Thyroid gland (tissue), 4 donors: ENCODE measurements at regions of chr11 and their contacts with region 1.

Region 1: GRCh38 chr11:130531061-130531460 is 82.6 kb downstream of the ADAMTS15 start:
- DNase-seq: peak; percentile 93
- H3K4me3 ChIP-seq: no peak overlapping the region
- H3K27ac ChIP-seq: peak overlapping the region; percentile 92 to 96 (median 96)
- H3K4me1 ChIP-seq: peaks cover 61 to 80% of the 10 kb centered on the region in 2 donors
- H3K27me3 ChIP-seq: no peaks in the 10 kb centered on the region
- CTCF ChIP-seq: peak in 4 of 6 experiments; percentile 26 to 53 (median 34)
- POLR2A ChIP-seq: no peak

Region 2: GRCh38 chr11:130449996-130450769 is 80.9 kb before region 1 on chr11:
- intact Hi-C with region 1: loop called (anchors 10 kb)
- DNase-seq: peak; percentile 89 to 94
- H3K4me3 ChIP-seq: peak overlapping the region; percentile 50 to 90 (median 85)
- H3K27ac ChIP-seq: peak overlapping the region; percentile 68 to 82 (median 77)
- H3K4me1 ChIP-seq: peaks cover 35 to 38% of the 10 kb centered on the region in 2 donors
- H3K27me3 ChIP-seq: no peaks in the 10 kb centered on the region
- CTCF ChIP-seq: peak; percentile 49 to 90 (median 69)
- POLR2A ChIP-seq: peak in 1 of 2 donors; percentile 78

Region 3: GRCh38 chr11:130476200-130476921 is 54.7 kb before region 1 on chr11:
- intact Hi-C with region 1: no loop called
- DNase-seq: peak; percentile 50 to 70
- H3K4me3 ChIP-seq: no peak overlapping the region
- H3K27ac ChIP-seq: peak overlapping the region; percentile 24 to 87 (median 83)
- H3K4me1 ChIP-seq: peaks cover 27 to 40% of the 10 kb centered on the region in 2 donors
- H3K27me3 ChIP-seq: no peaks in the 10 kb centered on the region
- CTCF ChIP-seq: no peak
- POLR2A ChIP-seq: peak in 1 of 2 donors; percentile 41

Region 4: GRCh38 chr11:130487924-130488815 is 42.9 kb before region 1 on chr11:
- intact Hi-C with region 1: no loop called
- DNase-seq: no peak
- H3K4me3 ChIP-seq: no peak overlapping the region
- H3K27ac ChIP-seq: no peak overlapping the region
- H3K4me1 ChIP-seq: peaks cover 0 to 4% of the 10 kb centered on the region in 2 donors
- H3K27me3 ChIP-seq: no peaks in the 10 kb centered on the region
- CTCF ChIP-seq: no peak
- POLR2A ChIP-seq: no peak